CD4-positive, alpha-beta T cell (primary cell): ENCODE measurements at regions of chr17 and their contacts with region 1.

Region 1: GRCh38 chr17:7329374-7329996 is 350 bp upstream of the NEURL4 start:
- DNase-seq: peak; percentile 90 to 99 (median 94)
- ATAC-seq: peak; percentile 73
- H3K4me3 ChIP-seq: peak overlapping the region; percentile 64
- H3K4me3 Mint-ChIP-seq: peak overlapping the region; percentile 90
- H3K27ac ChIP-seq: peak overlapping the region; percentile 80 to 92
- H3K27ac Mint-ChIP-seq: peak overlapping the region; percentile 88
- H3K4me1 ChIP-seq: peaks cover 58% of the 10 kb centered on the region
- H3K4me1 Mint-ChIP-seq: peaks cover 47% of the 10 kb centered on the region
- H3K27me3 ChIP-seq: no peaks in the 10 kb centered on the region
- H3K27me3 Mint-ChIP-seq: no peaks in the 10 kb centered on the region
- CTCF ChIP-seq: no peak

Region 2: GRCh38 chr17:7314719-7315569 is 14.5 kb before region 1 on chr17 and contains the start of gene GPS2:
- CTCF ChIA-PET with region 1: interaction called, 3 read pairs
- POLR2A ChIA-PET with region 1: interaction called, 52 read pairs
- intact Hi-C with region 1: loop called (anchors 1 to 2 kb)
- DNase-seq: peak; percentile 88 to 97 (median 94)
- ATAC-seq: peak; percentile 79
- H3K4me3 ChIP-seq: peak within 1 kb of the TSS; percentile 86
- H3K4me3 Mint-ChIP-seq: peak within 1 kb of the TSS; percentile 97
- H3K27ac ChIP-seq: peak within 1 kb of the TSS; percentile 82 to 92
- H3K27ac Mint-ChIP-seq: peak within 1 kb of the TSS; percentile 95
- H3K4me1 ChIP-seq: peaks cover 58% of the 10 kb centered on the region
- H3K4me1 Mint-ChIP-seq: peaks cover 59% of the 10 kb centered on the region
- H3K27me3 ChIP-seq: no peaks in the 10 kb centered on the region
- H3K27me3 Mint-ChIP-seq: no peaks in the 10 kb centered on the region
- CTCF ChIP-seq: no peak
- total RNA-seq, gene GPS2: 122 to 140 TPM